Cardiac septum (tissue), 1 donor: ENCODE measurements at regions of chr16 and their contacts with region 1.

Region 1: DNA sequence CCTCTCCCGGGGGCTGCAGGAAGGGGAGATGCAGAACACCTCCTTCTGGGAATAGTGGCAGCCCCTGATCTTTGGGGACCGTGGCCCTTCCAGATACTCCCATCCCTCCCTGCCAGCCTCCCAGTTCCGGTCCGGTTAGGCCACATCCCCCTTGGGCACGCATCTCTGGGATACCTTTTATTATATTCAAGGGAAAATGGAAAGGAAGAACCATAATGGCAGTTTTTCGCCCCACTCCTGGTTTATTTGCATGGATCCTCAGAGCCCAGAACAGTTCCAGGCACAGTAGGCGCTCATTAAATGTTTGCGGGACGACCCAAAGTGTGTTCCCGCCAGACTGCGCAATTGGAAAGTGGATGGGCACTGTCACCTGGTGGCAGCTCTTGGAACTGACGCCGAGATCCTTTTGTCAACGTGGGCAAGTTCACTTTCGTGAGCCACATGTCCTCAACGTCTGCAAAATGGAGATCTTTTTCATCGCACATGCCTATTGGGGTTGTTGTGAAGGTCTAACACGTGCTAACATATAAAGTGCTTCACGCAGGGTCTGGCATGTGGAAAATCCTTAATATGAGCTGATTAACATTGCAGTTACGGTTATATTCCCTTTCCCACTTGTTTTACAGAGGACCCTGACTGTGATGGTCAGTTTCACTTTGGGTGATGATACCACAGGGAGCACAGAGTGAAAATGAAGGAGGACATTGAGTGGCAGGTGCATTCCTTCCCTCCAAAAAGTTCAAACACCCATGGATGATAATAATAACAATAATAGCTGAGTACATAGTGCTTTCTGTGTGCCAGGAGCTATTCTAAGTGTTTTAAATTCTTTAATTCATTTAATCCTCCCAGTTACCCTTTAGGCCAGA is 1.7 kb upstream of the GPRC5B start:
- DNase-seq: peak; percentile 84

Region 2: GRCh38 chr16:19555162-19555937 is 331.0 kb before region 1 on chr16 and contains the start of gene VPS35L:
- intact Hi-C with region 1: loop called (anchors 2 kb)
- DNase-seq: peak; percentile 99
- total RNA-seq, gene VPS35L: 30.1 TPM

Region 3: DNA sequence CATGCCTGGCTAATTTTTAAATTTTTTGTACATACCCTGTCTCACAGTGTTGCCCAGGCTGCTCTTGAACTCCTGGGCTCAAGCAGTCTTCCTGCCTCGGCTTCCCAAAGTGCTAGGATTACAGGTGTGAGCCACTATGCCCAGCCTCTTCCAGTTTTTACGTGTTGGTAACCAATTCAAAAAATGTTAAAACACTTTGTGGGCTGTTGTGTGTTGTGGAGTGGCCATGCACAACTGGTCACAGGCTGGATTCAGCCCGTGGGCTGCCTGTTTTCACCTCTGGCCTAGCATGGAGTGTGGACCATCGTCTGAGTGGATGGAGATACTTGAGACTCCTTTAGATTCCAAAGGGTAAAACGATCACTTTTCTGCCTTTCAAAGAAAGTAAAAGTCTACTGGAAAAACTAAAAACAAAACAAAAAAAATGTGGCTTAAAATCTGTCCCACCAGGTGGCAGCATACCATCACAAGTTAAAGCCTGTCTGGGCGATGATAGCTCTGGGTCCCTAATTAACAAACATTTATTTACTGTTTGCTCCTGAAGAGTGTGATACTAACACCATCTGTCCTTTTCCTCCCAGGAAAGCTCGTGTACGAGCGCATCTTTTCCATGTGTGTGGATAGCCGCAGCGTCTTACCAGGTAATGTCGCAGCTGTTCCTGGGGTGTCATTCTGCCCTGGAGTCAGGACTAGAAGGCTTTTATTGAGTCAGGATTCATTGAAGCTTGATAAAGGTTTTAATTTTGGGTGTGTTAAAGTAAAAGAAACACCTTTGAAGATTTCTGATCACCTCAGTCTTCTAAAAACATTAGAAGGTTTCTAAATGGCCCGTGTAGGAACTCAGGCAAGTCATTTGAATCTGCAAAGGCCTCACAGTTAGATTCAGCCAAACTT is 285.0 kb before region 1 on chr16:
- intact Hi-C with region 1: loop called (anchors 1 kb)
- DNase-seq: no peak

Region 4: DNA sequence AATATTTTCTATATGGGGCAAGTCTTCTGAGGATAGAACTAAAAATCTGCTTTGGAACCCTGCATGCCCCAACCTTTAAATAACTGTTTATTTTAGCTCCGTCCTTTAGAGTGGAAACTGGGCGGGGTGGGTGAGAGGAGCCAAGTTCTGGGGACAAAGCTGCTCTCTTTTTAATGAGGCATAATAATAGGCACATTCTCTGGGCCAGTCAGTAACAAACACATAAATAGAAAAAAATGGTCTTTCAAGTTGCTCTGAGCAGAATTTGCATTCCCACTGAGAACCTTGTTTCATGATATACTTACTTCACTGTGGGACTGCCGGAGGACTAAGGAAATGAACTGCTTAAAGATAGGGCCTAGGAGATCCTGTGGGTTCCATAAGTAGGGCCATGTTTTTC is 219.8 kb before region 1 on chr16:
- intact Hi-C with region 1: loop called (anchors 10 kb)
- DNase-seq: no peak

Region 5: DNA sequence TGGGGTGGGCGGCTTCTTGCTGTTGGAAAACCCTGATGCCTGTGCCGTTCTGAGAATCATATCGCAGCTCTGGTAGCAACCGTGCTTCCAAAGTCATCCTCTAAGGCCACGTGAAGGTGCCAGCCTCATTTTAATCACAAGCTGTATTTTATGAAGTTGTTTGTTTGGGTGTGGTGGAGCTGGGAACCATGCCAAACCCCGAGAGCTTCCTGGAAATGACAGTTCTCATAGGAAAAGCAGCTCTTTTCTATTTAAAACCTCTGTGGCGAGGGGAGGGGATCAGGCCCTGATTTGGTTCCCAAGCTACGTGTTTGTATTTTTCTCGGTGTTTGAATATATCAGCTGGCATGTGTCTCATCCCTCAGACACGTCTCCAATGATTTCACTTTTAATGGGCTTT is 190.0 kb before region 1 on chr16:
- intact Hi-C with region 1: loop called (anchors 2 kb)
- DNase-seq: peak; percentile 85

Region 6: DNA sequence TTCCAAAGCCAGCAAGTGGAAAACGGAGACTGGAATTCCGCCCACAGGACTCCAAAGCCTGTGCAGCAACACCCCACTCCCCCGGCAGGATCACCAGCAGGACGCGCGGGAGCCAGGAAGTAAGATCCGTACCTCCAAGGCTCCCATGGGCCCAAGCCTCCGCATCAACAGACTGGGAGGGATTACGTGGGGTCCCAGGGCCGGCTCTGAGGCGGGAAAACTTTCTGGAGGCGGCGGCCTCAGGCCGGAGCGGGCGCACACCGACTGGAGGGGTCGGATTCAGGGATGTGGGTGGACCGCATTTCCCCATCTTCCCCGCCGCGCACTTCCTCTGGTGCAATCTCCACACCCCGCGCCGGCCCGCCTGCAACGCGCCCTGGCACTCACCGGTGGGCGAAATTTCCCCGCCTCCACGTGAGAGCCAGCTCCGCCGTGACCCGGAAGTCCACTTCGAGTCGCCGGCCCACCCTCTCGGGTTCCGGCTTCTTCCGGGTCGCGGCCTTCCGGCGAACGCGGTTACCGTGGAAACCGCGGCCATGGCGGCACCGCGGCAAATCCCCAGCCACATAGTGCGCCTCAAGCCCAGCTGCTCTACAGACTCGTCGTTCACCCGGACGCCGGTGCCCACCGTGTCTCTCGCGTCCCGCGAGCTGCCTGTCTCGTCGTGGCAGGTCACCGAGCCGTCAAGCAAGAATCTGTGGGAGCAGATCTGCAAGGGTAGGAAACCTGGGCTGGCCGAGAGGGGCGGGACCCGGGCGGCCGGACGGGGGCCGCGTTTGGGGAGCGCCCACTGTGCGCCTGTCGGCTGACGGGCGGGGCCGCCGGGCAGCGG is 168.3 kb before region 1 on chr16 and contains the starts of genes IQCK and KNOP1:
- intact Hi-C with region 1: loop called (anchors 1 kb)
- DNase-seq: peak; percentile 95
- total RNA-seq, gene IQCK: 7.3 TPM
- total RNA-seq, gene KNOP1: 6.8 TPM

Region 7: GRCh38 chr16:19840524-19841110 is 45.7 kb before region 1 on chr16:
- intact Hi-C with region 1: loop called (anchors 2 kb)
- DNase-seq: peak; percentile 82